Heart right ventricle (tissue), 16 donors: ENCODE measurements at regions of chr15 and their contacts with region 1.

Region 1: GRCh38 chr15:85644727-85645126 is 150.0 kb downstream of the KLHL25 start:
- DNase-seq: no peak
- ATAC-seq: no peak
- H3K4me3 ChIP-seq: no peak overlapping the region
- H3K27ac ChIP-seq: peak overlapping the region in 6 of 10 donors; percentile 7 to 82 (median 27)
- H3K4me1 ChIP-seq: peaks cover 23 to 94% (median 80%) of the 10 kb centered on the region in 9 donors
- H3K27me3 ChIP-seq: no peaks in the 10 kb centered on the region
- CTCF ChIP-seq: no peak

Region 2: GRCh38 chr15:85592148-85592547 is 52.6 kb before region 1 on chr15:
- intact Hi-C with region 1: loop called in 1 of 10 experiments (anchors 2 kb)
- DNase-seq: no peak
- ATAC-seq: peak in 7 of 8 donors; percentile 62 to 80 (median 68)
- H3K4me3 ChIP-seq: no peak overlapping the region
- H3K27ac ChIP-seq: peak overlapping the region in 9 of 10 donors; percentile 20 to 72 (median 59)
- H3K4me1 ChIP-seq: peaks cover 9 to 96% (median 80%) of the 10 kb centered on the region in 9 donors
- H3K27me3 ChIP-seq: no peaks in the 10 kb centered on the region
- CTCF ChIP-seq: peak in 7 of 9 donors; percentile 15 to 61 (median 39)

Region 3: DNA sequence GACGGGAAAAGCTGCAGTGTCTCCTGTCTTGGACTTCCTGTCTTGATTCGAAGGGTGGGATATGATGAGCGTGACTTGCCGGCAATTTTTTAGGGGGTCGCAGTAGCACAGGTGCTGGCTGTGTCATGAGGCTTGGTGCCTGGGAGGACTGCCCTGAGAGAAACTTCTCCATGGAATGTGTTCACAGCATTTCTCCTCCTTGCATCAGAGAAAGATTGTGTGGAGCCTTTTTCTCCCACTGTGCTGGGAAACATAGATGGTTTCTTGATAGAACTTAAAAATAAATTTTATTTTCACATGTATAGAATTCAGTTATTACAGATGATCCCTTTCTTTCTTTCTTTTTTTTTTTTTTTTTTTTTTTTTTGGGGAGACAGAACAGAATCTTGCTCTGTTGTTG is 28.6 kb after region 1 on chr15:
- intact Hi-C with region 1: no loop called
- DNase-seq: no peak
- ATAC-seq: peak in 5 of 8 donors; percentile 18 to 31 (median 24)
- H3K4me3 ChIP-seq: no peak overlapping the region
- H3K27ac ChIP-seq: peak overlapping the region in 8 of 10 donors; percentile 0 to 89 (median 65)
- H3K4me1 ChIP-seq: peaks cover 13 to 84% (median 33%) of the 10 kb centered on the region in 9 donors
- H3K27me3 ChIP-seq: no peaks in the 10 kb centered on the region
- CTCF ChIP-seq: no peak